Heart right ventricle (tissue), 16 donors: ENCODE measurements at regions of chr18 and their contacts with region 1.

Region 1: DNA sequence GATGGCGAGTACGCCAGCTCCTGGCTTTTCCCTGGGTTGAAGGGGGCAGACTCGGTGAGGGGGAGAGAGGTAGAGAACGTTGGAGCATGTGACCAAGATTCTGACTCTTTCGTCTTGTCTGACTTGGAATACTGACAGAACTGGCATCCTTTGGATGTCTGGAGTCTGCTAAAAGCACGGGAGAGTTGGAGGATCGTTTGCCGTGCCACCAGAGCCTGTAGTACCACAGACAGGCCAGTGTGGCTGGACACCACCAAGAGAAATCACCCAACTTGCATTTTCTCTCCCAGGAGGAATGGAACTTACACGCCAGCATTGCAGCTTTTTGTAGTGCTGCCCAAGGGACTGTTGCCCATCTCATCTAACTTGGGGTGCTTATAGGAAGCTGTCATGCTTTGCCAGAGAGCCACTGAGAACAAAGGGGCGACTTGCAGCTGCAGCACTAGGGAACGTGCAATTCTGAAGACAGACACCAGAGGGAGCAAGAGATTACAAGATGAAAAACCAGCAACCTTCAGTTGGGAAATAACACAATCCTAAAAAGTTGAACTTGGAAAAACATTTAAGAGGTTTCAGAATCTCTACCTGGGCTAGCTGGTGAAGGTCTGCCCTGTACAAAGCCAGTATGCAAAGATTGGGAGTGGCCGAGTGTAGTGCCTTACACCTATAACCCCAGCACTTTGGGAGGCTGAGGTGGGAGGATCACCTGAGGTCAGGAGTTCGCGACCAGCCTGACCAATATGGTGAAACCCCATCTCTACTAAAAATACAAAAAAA is 24.1 kb downstream of the PSMG2 start:
- DNase-seq: peak in 1 of 2 donors; percentile 56
- ATAC-seq: peak in 6 of 8 donors; percentile 26 to 56 (median 40)
- H3K4me3 ChIP-seq: no peak overlapping the region
- H3K27ac ChIP-seq: no peak overlapping the region
- H3K4me1 ChIP-seq: no peaks in the 10 kb centered on the region
- H3K27me3 ChIP-seq: no peaks in the 10 kb centered on the region
- CTCF ChIP-seq: peak; percentile 69 to 92 (median 89)

Region 2: DNA sequence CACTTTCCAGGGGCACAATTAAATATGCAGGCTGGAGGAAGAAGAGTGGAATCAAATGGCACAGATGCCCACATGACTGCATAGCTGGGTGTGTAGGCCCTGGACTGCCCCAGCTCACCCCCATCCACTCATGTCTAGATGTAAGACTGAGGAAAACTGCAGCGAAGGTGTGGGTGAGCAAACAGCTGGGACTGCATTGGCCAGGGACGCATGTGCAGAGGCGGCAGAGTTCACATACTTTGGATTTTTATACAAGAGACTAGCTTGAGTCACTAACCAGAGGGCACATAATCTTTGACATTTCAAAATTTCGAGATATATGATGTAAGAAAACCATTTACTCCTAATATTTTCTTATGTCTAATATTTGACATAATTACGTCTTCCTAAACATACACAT is 129.2 kb before region 1 on chr18:
- intact Hi-C with region 1: no loop called
- DNase-seq: peak; percentile 15 to 23
- ATAC-seq: peak; percentile 50 to 84 (median 78)
- H3K4me3 ChIP-seq: no peak overlapping the region
- H3K27ac ChIP-seq: peak overlapping the region in 9 of 10 donors; percentile 29 to 78 (median 68)
- H3K4me1 ChIP-seq: peaks cover 0 to 61% (median 34%) of the 10 kb centered on the region in 9 donors
- H3K27me3 ChIP-seq: no peaks in the 10 kb centered on the region
- CTCF ChIP-seq: no peak

Region 3: GRCh38 chr18:12702221-12703095 is 24.5 kb before region 1 on chr18 and contains the starts of genes CEP76 and PSMG2:
- intact Hi-C with region 1: no loop called
- DNase-seq: peak; percentile 93 to 94
- ATAC-seq: peak; percentile 95 to 97 (median 97)
- H3K4me3 ChIP-seq: peak within 1 kb of the TSS; percentile 70 to 96 (median 93)
- H3K27ac ChIP-seq: peak within 1 kb of the TSS; percentile 94 to 99 (median 96)
- H3K4me1 ChIP-seq: peaks cover 4 to 45% (median 31%) of the 10 kb centered on the region in 9 donors
- H3K27me3 ChIP-seq: no peaks in the 10 kb centered on the region
- CTCF ChIP-seq: no peak
- total RNA-seq, gene CEP76: 2.7 to 5.9 (median 4.0) TPM
- total RNA-seq, gene PSMG2: 36.2 to 51.8 (median 46.0) TPM

Region 4: DNA sequence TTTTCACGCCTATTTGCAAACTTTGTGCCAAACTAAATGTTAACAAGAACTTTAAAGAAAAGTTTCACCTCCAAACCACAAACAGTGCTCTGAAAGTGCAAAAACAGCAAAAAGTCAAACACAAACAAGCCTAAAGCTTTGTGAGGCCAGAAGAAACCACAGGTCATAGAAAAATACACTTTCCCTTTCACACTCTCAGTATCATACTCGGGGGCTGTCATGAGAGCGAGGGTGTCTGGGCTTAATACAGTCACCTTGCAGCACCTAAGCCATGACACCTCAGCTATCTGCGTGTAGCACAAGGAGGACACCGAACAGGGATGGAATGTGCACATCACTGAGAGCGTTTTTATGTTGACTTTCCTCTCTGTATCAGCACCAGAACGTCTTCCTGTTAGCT is 194.2 kb after region 1 on chr18:
- intact Hi-C with region 1: loop called in 1 of 10 experiments (anchors 2 kb)
- DNase-seq: no peak
- ATAC-seq: no peak
- H3K4me3 ChIP-seq: no peak overlapping the region
- H3K27ac ChIP-seq: no peak overlapping the region
- H3K4me1 ChIP-seq: no peaks in the 10 kb centered on the region
- H3K27me3 ChIP-seq: no peaks in the 10 kb centered on the region
- CTCF ChIP-seq: no peak